CD4-positive, alpha-beta memory T cell (primary cell): ENCODE measurements at regions of chr7 and their contacts with region 1.

Region 1: DNA sequence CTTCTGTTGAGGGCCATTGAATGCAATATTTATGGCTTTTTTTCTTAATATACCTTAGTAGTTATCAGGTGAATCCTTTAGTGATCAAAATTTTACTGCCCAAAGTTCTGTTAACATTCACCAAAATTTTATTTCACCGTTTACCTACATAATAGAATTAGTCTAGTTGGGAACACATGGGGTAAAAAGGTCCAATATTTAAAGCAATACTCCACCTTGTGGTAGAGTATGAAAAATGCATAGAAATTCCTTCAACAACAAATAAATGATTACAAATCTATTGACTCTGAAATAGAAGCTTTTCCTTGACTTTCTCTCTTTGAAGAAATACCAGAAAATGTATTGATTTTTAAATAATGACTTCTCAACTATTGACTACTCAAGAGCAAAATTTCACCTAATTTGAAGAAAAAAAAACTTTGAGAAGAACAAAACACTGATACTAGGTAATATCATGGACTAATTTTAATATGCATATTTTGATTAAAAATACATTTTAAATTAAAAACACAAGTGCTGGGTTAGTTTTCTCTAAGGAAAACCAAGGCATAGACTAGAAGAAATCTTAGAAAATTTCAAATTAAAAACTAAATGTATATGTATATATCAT is 43.3 kb downstream of the POLR1F start:
- DNase-seq: peak in 3 of 5 donors; percentile 13 to 17 (median 16)
- H3K4me3 ChIP-seq: no peak overlapping the region
- H3K4me3 Mint-ChIP-seq: no peak overlapping the region
- H3K27ac ChIP-seq: no peak overlapping the region
- H3K27ac Mint-ChIP-seq: no peak overlapping the region
- H3K4me1 ChIP-seq: peaks cover 3% of the 10 kb centered on the region
- H3K4me1 Mint-ChIP-seq: peaks cover 1 to 11% (median 7%) of the 10 kb centered on the region in 4 donors
- H3K27me3 ChIP-seq: no peaks in the 10 kb centered on the region
- H3K27me3 Mint-ChIP-seq: no peaks in the 10 kb centered on the region

Region 2: DNA sequence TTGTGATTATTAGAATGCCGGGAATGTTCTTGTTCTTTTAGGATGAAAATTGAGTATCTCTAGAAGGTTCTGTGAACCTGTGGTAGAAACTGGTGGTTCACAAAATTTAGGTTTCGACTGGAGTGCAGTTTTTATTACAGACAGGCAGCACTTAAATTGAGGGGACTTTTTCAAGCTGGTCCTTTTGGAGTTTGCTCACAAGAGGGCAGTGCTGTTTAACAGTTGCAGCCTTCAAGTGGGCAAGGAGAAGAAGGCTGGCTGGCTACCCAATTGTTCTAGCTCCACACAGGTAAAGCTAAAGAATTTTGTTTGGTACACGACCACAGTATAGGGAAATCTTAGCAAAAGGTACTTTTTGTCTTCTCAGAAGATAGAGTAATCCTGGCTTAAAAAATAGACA is 1958.8 kb before region 1 on chr7:
- CTCF ChIA-PET with region 1: no interaction called
- POLR2A ChIA-PET with region 1: no interaction called
- intact Hi-C with region 1: loop called (anchors 1 kb)
- DNase-seq: peak in 4 of 5 donors; percentile 10 to 24 (median 18)
- H3K4me3 ChIP-seq: no peak overlapping the region
- H3K4me3 Mint-ChIP-seq: no peak overlapping the region
- H3K27ac ChIP-seq: no peak overlapping the region
- H3K27ac Mint-ChIP-seq: no peak overlapping the region
- H3K4me1 ChIP-seq: no peaks in the 10 kb centered on the region
- H3K4me1 Mint-ChIP-seq: no peaks in the 10 kb centered on the region
- H3K27me3 ChIP-seq: no peaks in the 10 kb centered on the region
- H3K27me3 Mint-ChIP-seq: peaks cover under 1 to 4% of the 10 kb centered on the region in 2 donors

Region 3: GRCh38 chr7:18352339-18353255 is 1312.9 kb before region 1 on chr7:
- CTCF ChIA-PET with region 1: no interaction called
- POLR2A ChIA-PET with region 1: no interaction called
- intact Hi-C with region 1: loop called (anchors 5 kb)
- DNase-seq: no peak
- H3K4me3 ChIP-seq: no peak overlapping the region
- H3K4me3 Mint-ChIP-seq: no peak overlapping the region
- H3K27ac ChIP-seq: no peak overlapping the region
- H3K27ac Mint-ChIP-seq: no peak overlapping the region
- H3K4me1 ChIP-seq: peaks cover 5% of the 10 kb centered on the region
- H3K4me1 Mint-ChIP-seq: peaks cover 1 to 6% (median 3%) of the 10 kb centered on the region in 4 donors
- H3K27me3 ChIP-seq: no peaks in the 10 kb centered on the region
- H3K27me3 Mint-ChIP-seq: peaks cover 0 to 3% of the 10 kb centered on the region in 2 donors